WTC11 (cell line): ENCODE measurements at regions of chr1 and their contacts with region 1.

Region 1: DNA sequence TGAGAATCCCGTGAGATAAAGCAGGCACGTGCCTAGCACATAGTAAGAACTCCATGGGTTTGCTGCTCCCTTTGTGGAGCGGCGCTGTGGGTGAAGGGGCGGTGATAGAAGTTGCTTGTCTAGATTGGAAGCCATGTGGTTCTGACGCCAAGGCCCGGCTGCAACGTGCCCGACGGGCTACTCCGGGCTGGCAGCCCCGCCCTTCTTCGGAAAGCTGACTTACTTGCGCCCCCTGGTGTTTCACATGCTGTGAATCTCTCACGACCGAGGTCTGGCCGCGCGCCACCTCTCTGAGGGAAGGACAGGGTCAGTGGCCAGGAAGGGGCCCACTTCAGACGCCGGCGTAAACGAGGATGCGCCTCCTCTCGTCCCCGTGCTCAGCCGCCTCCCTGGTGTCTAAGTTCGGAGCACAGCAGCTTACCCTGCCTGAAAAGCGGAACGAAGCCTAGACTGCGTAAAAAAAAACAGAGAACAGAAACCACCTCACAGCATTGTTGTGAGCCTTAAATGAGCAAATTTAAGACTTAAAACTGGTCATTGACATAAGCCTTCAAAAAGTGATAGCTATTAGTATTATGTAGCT is 42.6 kb upstream of the WNT2B start:
- DNase-seq: peak; percentile 95
- ATAC-seq: peak; percentile 85
- H3K4me3 Mint-ChIP-seq: peak overlapping the region; percentile 63
- H3K27ac Mint-ChIP-seq: no peak overlapping the region
- H3K4me1 Mint-ChIP-seq: peaks cover 30% of the 10 kb centered on the region
- H3K27me3 Mint-ChIP-seq: peaks cover 24% of the 10 kb centered on the region
- CTCF ChIP-seq: peak; percentile 70

Region 2: GRCh38 chr1:112395821-112396652 is 70.1 kb before region 1 on chr1 and contains the start of gene CTTNBP2NL:
- CTCF ChIA-PET with region 1: interaction called, 80 read pairs
- POLR2A ChIA-PET with region 1: interaction called, 4 read pairs
- DNase-seq: peak; percentile 98
- ATAC-seq: peak; percentile 94
- H3K4me3 Mint-ChIP-seq: peak within 1 kb of the TSS; percentile 99
- H3K27ac Mint-ChIP-seq: peak within 1 kb of the TSS; percentile 99
- H3K4me1 Mint-ChIP-seq: peaks cover 43% of the 10 kb centered on the region
- H3K27me3 Mint-ChIP-seq: no peaks in the 10 kb centered on the region
- CTCF ChIP-seq: no peak
- total RNA-seq, gene CTTNBP2NL: 28.5 to 32.8 TPM (median 32.0 TPM) in 3 replicates

Region 3: DNA sequence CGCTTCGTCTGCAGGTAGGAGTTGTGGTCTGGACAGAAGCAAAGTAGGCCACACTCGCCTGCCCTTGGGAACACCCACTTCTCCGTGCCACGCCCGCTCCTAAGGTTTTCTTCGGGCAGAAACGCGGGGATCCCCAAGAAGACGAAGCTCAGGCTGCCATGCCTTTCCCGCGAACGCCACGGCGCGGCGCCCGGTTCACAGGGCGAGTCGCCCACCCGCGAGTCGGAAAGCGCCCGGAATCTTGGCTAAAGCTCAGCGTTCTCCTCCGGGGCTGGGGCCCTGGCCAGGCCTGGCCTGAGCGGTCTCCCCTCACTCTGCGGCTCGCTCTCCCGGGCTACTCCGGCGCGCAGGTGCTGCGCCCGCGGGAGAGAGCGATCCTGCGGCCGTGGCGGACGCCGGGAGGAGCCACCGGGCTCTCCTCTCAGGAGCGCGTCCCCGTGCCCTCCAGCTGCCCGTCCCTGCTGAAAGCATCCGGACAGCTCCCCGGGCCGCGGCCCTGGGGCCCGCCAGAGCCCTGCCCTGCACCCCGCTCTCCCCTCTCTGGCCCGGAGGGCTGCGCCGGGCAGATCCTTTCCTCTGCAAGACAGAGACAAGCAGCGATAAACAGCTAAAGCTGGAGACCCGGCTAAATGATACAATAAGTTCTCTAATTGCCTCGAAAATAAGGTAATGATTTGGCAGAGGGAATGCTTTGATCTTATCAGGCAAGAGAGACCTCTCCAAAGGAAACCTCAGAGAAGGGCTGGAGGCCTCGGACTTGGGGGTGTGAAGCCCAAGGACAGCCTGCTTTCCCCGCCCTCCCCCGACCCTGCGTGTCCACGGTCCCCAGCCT is 35.9 kb after region 1 on chr1:
- CTCF ChIA-PET with region 1: interaction called, 11 read pairs
- POLR2A ChIA-PET with region 1: no interaction called
- DNase-seq: peak; percentile 63
- ATAC-seq: peak; percentile 79
- H3K4me3 Mint-ChIP-seq: peak overlapping the region; percentile 70
- H3K27ac Mint-ChIP-seq: no peak overlapping the region
- H3K4me1 Mint-ChIP-seq: peaks cover 15% of the 10 kb centered on the region
- H3K27me3 Mint-ChIP-seq: peaks cover 88% of the 10 kb centered on the region
- CTCF ChIP-seq: no peak